Left lung (tissue), 14 donors: ENCODE measurements at regions of chr17 and their contacts with region 1.

Region 1: DNA sequence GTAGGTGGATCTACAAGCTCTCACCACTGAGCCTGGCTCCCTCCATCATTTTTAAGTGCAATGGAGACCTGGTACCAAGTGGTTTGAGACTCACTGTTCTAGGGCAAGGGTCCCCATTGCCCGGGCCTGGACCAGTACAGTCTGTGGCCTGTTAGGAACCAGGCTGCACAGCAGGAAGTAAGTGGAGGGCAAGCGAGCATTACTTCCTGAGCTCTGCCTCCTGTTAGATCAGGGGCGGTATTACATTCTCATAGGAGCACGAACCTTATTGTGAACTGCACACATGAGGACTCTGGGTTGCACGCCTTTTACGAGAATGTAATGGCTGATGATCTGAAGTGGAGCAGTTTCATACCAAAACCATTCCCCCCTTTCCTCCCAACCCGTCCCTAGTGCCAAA is 6.8 kb upstream of the ZNF594 start:
- DNase-seq: no peak
- ATAC-seq: no peak
- H3K4me3 ChIP-seq: no peak overlapping the region
- H3K27ac ChIP-seq: no peak overlapping the region
- H3K4me1 ChIP-seq: no peaks in the 10 kb centered on the region
- H3K27me3 ChIP-seq: no peaks in the 10 kb centered on the region
- CTCF ChIP-seq: no peak

Region 2: DNA sequence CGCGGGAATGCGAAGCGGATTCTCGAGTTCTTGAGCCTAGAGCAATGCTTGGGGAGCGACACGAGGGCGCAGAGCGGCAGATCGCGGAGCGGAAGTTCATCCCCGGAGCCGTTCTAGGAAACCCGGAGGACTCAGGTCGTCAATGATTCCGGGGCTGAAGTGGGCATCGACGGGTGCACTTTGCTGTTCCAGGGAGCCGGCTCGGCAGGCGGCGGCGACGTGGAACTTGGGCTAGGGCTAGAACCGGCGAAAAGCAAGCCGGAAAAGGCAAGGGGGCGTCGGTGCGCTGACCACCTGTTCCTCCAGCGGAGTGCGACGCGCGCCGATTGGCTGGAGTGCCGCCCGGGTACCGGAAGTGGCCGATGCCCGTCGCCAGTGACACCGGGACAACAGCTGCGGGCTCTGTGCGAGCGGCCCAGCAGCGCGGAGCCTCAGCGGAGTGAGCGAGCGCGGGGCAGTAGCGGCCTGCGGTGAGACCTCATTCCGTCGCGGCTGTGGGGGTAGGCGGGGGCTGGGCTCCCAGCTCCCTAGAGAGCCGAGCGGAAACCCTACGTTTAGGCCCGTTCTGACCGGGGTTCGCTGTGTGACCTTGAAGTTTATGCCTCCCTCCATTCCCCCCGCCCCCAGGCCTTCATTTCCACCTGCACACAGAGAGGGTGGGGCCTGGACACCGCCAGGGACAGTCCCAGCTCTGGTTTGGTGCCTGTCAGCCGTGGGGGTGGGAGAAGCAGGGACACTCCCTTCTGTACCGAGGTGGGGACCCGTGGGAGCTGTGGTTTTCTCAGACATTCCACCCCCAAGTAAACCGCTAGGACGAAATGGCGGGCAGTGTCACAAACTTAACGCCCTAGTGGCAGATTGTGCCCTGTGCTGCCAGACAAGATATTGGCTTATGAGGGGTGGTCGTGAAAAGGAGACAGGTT is 120.1 kb before region 1 on chr17 and contains the start of gene ZFP3:
- intact Hi-C with region 1: no loop called
- DNase-seq: peak; percentile 82 to 95 (median 86)
- ATAC-seq: peak; percentile 98
- H3K4me3 ChIP-seq: peak within 1 kb of the TSS; percentile 54 to 72
- H3K27ac ChIP-seq: peak within 1 kb of the TSS; percentile 70 to 83
- H3K4me1 ChIP-seq: peaks cover 9 to 17% of the 10 kb centered on the region in 2 donors
- H3K27me3 ChIP-seq: no peaks in the 10 kb centered on the region
- CTCF ChIP-seq: no peak
- polyA plus RNA-seq, gene ZFP3: 8.7 to 10.3 (median 9.5) TPM

Region 3: GRCh38 chr17:5237541-5238016 is 39.1 kb after region 1 on chr17:
- intact Hi-C with region 1: loop called in 1 of 2 experiments (anchors 5 kb)
- DNase-seq: peak in 2 of 4 donors; percentile 23 to 67
- ATAC-seq: peak; percentile 89
- H3K4me3 ChIP-seq: no peak overlapping the region
- H3K27ac ChIP-seq: no peak overlapping the region
- H3K4me1 ChIP-seq: peaks cover 0 to 14% of the 10 kb centered on the region in 2 donors
- H3K27me3 ChIP-seq: no peaks in the 10 kb centered on the region
- CTCF ChIP-seq: peak; percentile 50 to 81